Ovary (tissue), 10 donors: ENCODE measurements at regions of chr16 and their contacts with region 1.

Region 1: DNA sequence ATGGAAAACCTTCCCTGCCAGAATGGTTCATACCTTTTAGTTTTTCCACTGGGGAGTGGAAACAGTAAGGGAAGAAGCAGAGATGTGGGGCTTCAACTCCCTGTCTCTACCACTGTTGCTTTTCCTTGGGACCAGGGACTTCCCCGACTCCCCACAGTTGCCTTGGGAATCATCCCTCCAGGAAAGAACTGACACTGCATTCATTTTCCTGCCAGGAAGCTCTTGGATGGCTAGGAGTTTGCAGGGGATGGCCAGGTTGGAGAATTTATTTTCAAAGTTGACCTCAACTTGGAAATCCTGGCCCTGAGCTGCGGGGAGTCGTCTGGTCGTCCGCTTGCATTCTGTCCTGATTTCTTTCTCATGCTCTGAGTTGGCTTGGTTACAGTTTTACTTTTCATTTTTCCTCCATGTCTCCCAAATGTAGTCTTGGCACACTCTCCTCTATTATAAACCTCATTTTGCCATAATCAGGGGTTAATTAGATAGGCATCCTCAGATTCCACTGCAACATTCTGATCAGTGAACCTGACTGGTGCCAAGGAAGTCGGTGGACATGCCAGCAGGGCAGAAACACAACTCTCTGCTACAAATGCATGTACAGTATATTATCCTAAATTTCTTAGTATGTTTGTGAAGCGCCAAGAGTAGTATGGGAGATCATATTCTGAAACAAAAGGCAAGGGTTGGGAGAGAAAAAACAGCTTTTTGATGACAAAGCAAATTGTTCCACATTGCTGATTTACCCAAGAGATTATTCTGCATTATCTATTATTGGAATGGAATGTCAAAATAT is 220.5 kb upstream of the XYLT1 start:
- DNase-seq: no peak
- H3K4me3 ChIP-seq: no peak overlapping the region
- H3K27ac ChIP-seq: no peak overlapping the region
- H3K4me1 ChIP-seq: no peaks in the 10 kb centered on the region
- H3K27me3 ChIP-seq: no peaks in the 10 kb centered on the region
- CTCF ChIP-seq: no peak
- EP300 ChIP-seq: no peak
- POLR2A ChIP-seq: no peak

Region 2: GRCh38 chr16:17258848-17259713 is 432.2 kb before region 1 on chr16:
- intact Hi-C with region 1: no loop called
- DNase-seq: no peak
- H3K4me3 ChIP-seq: no peak overlapping the region
- H3K27ac ChIP-seq: no peak overlapping the region
- H3K4me1 ChIP-seq: no peaks in the 10 kb centered on the region
- H3K27me3 ChIP-seq: no peaks in the 10 kb centered on the region
- CTCF ChIP-seq: no peak
- EP300 ChIP-seq: no peak
- POLR2A ChIP-seq: no peak

Region 3: DNA sequence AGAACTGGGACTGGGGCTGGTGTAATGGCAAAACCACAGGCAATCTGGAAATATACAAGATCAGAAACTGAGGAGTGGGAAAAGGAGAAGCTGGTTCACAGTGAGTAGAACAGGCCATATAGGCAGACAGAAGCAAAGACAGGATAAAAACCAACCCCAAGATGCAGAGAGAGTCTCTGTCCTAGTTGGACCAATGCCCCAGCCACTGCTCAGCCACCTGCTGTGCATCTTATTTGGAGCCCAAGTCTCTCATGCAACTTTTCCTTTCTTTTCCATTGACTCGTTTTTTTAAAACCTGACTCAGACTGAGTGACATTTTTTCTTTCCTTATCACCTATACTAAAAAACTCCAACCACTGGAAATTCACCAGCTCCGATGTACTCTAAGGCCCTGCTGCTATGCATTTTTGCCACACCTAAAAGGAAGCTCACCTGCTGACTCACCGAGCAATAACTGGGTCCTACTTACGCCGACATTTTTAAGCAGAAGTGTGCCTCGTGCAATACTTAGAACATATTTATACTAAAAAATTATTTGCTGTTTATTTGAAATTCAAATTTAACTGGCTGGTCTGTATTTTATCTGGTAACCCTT is 119.7 kb before region 1 on chr16:
- intact Hi-C with region 1: no loop called
- DNase-seq: no peak
- H3K4me3 ChIP-seq: no peak overlapping the region
- H3K27ac ChIP-seq: no peak overlapping the region
- H3K4me1 ChIP-seq: no peaks in the 10 kb centered on the region
- H3K27me3 ChIP-seq: no peaks in the 10 kb centered on the region
- CTCF ChIP-seq: no peak
- EP300 ChIP-seq: no peak
- POLR2A ChIP-seq: no peak

Region 4: GRCh38 chr16:17622366-17622765 is 68.9 kb before region 1 on chr16:
- intact Hi-C with region 1: loop called in 1 of 4 experiments (anchors 2 kb)
- DNase-seq: no peak
- H3K4me3 ChIP-seq: no peak overlapping the region
- H3K27ac ChIP-seq: no peak overlapping the region
- H3K4me1 ChIP-seq: no peaks in the 10 kb centered on the region
- H3K27me3 ChIP-seq: no peaks in the 10 kb centered on the region
- CTCF ChIP-seq: no peak
- EP300 ChIP-seq: no peak
- POLR2A ChIP-seq: no peak

Region 5: GRCh38 chr16:17633104-17633951 is 58.0 kb before region 1 on chr16:
- intact Hi-C with region 1: loop called in 1 of 4 experiments (anchors 10 kb)
- DNase-seq: no peak
- H3K4me3 ChIP-seq: no peak overlapping the region
- H3K27ac ChIP-seq: no peak overlapping the region
- H3K4me1 ChIP-seq: no peaks in the 10 kb centered on the region
- H3K27me3 ChIP-seq: no peaks in the 10 kb centered on the region
- CTCF ChIP-seq: no peak
- EP300 ChIP-seq: no peak
- POLR2A ChIP-seq: no peak

Region 6: DNA sequence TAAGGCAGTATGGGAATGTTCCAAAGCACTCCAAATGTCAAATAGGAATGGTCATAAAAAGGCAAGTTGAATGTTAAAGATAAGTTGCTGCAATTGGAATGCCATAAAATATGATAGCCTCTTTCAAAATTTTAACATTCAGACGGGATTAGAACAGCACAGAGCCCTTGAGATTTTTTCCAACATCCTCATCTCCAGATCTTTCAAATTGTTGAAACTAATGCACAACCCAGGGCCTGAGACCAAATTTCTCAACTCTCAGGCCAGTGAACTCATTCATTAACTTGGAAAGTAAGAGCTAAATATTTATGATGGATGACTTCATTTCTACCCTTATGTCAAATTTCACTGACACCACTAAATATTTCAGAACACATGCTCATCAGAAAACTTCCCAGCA is 126.0 kb after region 1 on chr16:
- intact Hi-C with region 1: no loop called
- DNase-seq: no peak
- H3K4me3 ChIP-seq: no peak overlapping the region
- H3K27ac ChIP-seq: no peak overlapping the region
- H3K4me1 ChIP-seq: no peaks in the 10 kb centered on the region
- H3K27me3 ChIP-seq: no peaks in the 10 kb centered on the region
- CTCF ChIP-seq: no peak
- EP300 ChIP-seq: no peak
- POLR2A ChIP-seq: no peak

Region 7: GRCh38 chr16:18003033-18003432 is 311.7 kb after region 1 on chr16:
- intact Hi-C with region 1: no loop called
- DNase-seq: no peak
- H3K4me3 ChIP-seq: no peak overlapping the region
- H3K27ac ChIP-seq: no peak overlapping the region
- H3K4me1 ChIP-seq: no peaks in the 10 kb centered on the region
- H3K27me3 ChIP-seq: no peaks in the 10 kb centered on the region
- CTCF ChIP-seq: no peak
- EP300 ChIP-seq: no peak
- POLR2A ChIP-seq: no peak